BJ (cell line): ENCODE measurements at regions of chr17 and their contacts with region 1.

Region 1: DNA sequence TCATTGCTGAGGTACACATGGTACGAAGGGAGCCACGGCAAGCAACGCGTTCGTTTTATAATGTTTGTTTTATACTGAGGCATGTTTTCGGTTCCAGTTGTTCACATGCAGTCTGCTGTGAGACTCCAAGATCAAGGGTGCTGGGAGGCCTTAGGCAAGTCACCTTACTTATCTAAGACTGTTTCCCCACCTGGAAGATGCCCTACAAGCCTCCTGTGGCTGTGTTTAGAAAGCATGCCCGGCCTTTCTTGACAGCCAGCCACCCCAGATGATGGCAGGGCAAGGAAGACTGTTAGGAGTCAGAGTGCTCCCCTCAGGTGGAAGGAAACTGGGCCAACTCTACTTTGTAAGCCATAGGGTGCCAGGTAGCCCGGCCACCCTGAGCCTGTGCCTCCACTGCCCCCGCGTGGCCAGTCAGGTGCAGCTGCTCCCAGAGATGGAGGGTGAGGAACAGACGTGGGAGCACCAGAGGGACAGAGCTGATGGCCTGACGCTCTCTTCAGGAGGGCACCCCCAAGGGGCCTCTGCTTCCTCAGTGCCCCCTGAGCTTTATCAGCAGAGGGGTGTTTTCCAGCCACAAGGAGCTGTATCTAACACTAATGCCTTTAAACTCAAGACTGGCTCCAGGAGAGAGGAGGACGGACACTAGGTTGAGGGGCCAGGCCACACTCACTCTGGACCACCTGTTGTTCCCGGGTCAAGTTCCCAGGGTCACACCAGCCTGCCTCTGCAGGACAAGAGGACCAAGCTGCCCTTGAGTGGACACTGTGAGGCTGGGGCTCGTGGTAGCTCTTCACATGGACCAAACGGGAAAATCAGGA is 5.4 kb downstream of the NAT9 start:
- DNase-seq: no peak
- H3K4me3 ChIP-seq: no peak overlapping the region
- H3K27me3 ChIP-seq: no peaks in the 10 kb centered on the region
- CTCF ChIP-seq: peak; percentile 85

Region 2: GRCh38 chr17:74552037-74552436 is 218.7 kb before region 1 on chr17:
- CTCF ChIA-PET with region 1: no interaction called
- POLR2A ChIA-PET with region 1: no interaction called
- DNase-seq: no peak
- H3K4me3 ChIP-seq: no peak overlapping the region
- H3K27me3 ChIP-seq: no peaks in the 10 kb centered on the region
- CTCF ChIP-seq: no peak

Region 3: DNA sequence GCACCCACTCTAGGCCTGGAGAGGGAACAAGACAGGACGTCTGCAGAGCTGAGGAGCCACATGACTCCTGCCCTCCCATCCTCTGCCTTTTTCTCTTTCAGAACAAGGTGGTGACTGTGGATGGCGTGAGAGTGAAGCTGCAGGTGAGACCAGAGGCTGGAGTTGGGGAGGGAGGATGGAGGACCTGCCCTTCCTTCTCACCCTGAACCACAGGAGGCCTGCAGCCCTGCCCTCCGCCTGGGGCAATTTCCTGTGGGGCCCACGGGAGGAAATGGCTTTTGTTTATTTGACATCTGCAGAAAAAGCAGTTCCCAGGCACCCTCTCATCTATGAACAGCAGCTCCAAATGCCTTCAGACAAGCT is 28.6 kb before region 1 on chr17:
- CTCF ChIA-PET with region 1: interaction called, 52 read pairs
- POLR2A ChIA-PET with region 1: no interaction called
- DNase-seq: no peak
- H3K4me3 ChIP-seq: no peak overlapping the region
- H3K27me3 ChIP-seq: peaks cover 21% of the 10 kb centered on the region
- CTCF ChIP-seq: no peak

Region 4: DNA sequence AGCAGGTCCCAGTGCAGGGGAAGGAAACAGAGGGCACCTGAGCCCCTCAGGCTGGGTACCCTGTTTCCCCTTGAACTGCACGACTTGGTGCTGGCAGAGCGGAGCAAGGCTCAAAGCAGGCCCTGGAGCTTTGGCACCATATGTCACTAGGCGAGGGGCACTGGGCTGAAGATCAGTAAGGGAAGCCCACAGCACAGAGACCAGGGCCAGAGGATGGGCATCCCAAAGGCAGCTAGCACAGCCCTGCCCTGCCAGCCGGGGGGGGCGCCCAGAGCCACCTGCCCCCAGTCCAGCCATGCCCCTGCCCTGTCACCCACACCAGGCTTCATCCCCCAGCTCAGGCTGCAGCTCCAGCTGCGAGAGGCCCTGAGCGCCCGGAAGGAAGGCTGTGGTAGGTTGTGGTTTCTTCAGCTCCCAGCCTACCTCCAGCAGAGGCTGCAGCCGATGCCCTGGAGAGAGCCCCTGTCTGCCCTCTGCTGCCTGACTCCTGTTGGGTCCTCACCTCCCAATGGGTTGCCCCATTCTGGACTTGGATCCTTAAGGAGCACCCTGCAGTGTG is 11.4 kb before region 1 on chr17:
- CTCF ChIA-PET with region 1: interaction called, 25 read pairs
- POLR2A ChIA-PET with region 1: no interaction called
- DNase-seq: no peak
- H3K4me3 ChIP-seq: no peak overlapping the region
- H3K27me3 ChIP-seq: no peaks in the 10 kb centered on the region
- CTCF ChIP-seq: no peak

Region 5: GRCh38 chr17:74827800-74828199 is 57.1 kb after region 1 on chr17:
- CTCF ChIA-PET with region 1: no interaction called
- POLR2A ChIA-PET with region 1: interaction called, 18 read pairs
- DNase-seq: no peak
- H3K4me3 ChIP-seq: no peak overlapping the region
- H3K27me3 ChIP-seq: no peaks in the 10 kb centered on the region
- CTCF ChIP-seq: no peak